ENCODE measurements at regions of chr2 and their contacts with region 1.

Region 1: DNA sequence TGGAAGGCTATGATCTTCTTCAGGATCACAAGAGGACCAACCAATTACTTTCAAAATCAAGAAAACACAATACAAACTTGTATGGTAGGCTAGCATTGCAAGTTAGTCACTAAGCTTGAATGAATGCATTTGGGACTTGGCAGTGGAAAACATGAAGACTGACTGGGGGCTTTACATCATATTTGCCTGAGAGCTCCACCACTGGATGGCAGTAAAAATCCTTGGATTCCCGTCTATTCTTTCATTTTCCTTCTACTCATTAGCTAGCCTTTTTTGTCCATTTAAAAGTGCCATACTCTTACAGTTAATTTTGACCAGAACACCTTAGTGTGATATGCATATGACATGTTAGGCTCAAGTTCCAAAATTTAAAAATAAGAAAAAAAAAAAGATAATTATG is 63.5 kb upstream of the RASGRP3 start:
- DNase-seq: peak in 1 of 5 donors; percentile 28
- ATAC-seq: peak in 2 of 4 donors; percentile 10 to 50
- H3K4me3 ChIP-seq: no peak overlapping the region
- H3K27ac ChIP-seq: no peak overlapping the region
- H3K4me1 ChIP-seq: peaks cover 0 to 11% (median 2%) of the 10 kb centered on the region in 12 donors
- H3K27me3 ChIP-seq: no peaks in the 10 kb centered on the region
- CTCF ChIP-seq: peak; percentile 33 to 70 (median 55)
- POLR2A ChIP-seq: no peak

Region 2: DNA sequence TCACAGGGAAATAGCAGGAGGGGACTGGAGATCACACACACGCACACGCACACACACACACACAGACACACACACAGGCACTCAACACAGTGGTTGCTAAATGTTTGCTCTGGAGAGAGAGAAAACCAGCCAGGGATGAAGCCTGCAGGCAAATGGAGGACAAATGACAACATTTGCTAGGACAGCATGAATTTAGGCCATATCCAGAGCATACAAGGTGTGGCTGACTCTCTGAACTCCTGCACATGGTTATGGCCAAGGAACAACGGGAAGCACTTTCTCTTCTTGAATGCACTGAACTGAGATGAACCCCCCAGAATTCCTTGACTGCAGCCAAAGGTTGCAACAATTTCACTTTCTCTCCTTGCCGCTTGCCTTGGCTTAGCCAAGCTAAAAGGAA is 166.5 kb before region 1 on chr2:
- intact Hi-C with region 1: no loop called
- DNase-seq: no peak
- ATAC-seq: peak in 3 of 4 donors; percentile 33 to 51 (median 43)
- H3K4me3 ChIP-seq: no peak overlapping the region
- H3K27ac ChIP-seq: no peak overlapping the region
- H3K4me1 ChIP-seq: peaks cover 0 to 22% (median under 1%) of the 10 kb centered on the region in 12 donors
- H3K27me3 ChIP-seq: no peaks in the 10 kb centered on the region
- CTCF ChIP-seq: no peak
- POLR2A ChIP-seq: no peak

Region 3: DNA sequence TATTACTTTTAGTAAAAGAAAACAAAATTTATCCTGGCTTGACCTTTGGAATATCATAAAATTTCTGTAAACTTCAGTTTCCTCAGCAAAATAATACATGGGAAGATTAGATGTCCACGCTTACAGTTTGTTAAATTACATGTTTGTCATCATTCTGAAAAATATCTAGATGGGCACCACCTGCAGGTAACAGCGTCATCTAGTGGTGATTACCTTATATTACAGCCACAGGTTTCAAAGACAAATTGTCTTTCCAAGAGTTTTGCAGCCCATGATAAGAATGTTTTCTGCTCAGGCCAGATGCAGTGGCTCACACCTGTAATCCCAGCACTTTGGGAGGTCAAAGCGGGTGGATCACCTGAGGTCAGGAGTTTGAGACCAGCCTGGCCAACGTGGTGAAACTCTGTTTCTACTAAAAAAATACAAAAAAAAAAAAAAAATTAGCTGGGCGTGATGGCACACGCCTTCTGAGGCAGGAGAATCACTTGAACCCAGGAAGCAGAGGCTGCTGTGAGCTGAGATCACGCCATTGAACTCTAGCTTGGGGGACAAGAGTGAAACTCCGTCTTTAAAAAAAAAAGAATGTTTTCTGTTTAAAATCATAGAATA is 32.8 kb before region 1 on chr2:
- intact Hi-C with region 1: no loop called
- DNase-seq: no peak
- ATAC-seq: no peak
- H3K4me3 ChIP-seq: no peak overlapping the region
- H3K27ac ChIP-seq: no peak overlapping the region
- H3K4me1 ChIP-seq: peaks cover 0 to 21% (median 3%) of the 10 kb centered on the region in 12 donors
- H3K27me3 ChIP-seq: no peaks in the 10 kb centered on the region
- CTCF ChIP-seq: peak in 11 of 12 donors; percentile 21 to 54 (median 39)
- POLR2A ChIP-seq: no peak

Region 4: GRCh38 chr2:33433279-33434235 is 20.6 kb after region 1 on chr2:
- intact Hi-C with region 1: loop called in 1 of 10 experiments (anchors 2 kb)
- DNase-seq: peak in 1 of 5 donors; percentile 48
- ATAC-seq: peak; percentile 65 to 89 (median 82)
- H3K4me3 ChIP-seq: no peak overlapping the region
- H3K27ac ChIP-seq: peak overlapping the region in 11 of 12 donors; percentile 6 to 76 (median 54)
- H3K4me1 ChIP-seq: peaks cover 0 to 38% (median 12%) of the 10 kb centered on the region in 12 donors
- H3K27me3 ChIP-seq: no peaks in the 10 kb centered on the region
- CTCF ChIP-seq: no peak
- POLR2A ChIP-seq: no peak

Region 5: GRCh38 chr2:33441235-33441810 is 28.4 kb after region 1 on chr2:
- intact Hi-C with region 1: loop called in 4 of 10 experiments (anchors 1 to 2 kb)
- DNase-seq: peak in 4 of 5 donors; percentile 56 to 64 (median 61)
- ATAC-seq: peak; percentile 66 to 85 (median 82)
- H3K4me3 ChIP-seq: no peak overlapping the region
- H3K27ac ChIP-seq: peak overlapping the region in 7 of 12 donors; percentile 10 to 74 (median 52)
- H3K4me1 ChIP-seq: peaks cover 0 to 45% (median 18%) of the 10 kb centered on the region in 12 donors
- H3K27me3 ChIP-seq: no peaks in the 10 kb centered on the region
- CTCF ChIP-seq: peak; percentile 51 to 83 (median 71)
- POLR2A ChIP-seq: no peak

Measured in heart left ventricle (tissue), 16 donors.